ENCODE measurements at regions of chr3 and their contacts with region 1.

Region 1: DNA sequence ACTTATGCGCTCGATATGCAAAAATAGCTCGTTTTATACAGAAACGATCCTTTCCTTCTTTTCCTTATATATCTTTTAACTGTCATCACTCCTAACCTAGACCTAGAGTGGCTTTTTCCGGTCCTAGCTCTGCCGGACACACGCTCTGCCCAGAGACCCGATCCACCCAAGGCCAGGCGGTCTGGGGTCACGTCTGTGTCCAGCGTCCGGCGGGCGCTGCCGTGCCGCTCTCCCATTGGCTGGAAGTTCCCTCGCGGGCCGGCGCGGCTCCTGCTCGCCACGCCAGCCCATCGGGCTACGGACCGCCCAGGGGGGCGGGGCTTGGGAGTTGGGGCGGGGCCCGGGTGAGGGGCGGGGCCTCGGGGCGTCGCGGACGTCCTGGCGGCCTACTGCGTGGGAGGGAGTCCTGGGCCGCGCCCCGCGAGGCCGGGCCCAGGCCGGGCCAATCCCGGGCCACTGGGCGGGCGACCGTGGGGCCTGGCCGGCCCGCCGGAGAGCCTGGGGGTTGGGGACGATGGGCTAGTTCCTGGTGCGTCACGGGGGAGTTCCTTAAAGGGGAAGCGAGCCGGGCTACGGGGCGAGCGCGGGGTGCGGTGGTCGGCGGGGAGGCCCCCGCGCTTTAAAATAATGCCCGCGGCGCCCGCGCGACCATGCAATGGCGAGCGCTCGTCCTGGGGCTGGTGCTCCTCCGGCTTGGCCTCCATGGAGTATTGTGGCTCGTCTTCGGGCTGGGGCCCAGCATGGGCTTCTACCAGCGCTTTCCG is at the start of gene EDEM1:
- DNase-seq: peak; percentile 98
- H3K4me3 Mint-ChIP-seq: peak within 1 kb of the TSS; percentile 96
- H3K27ac Mint-ChIP-seq: peak within 1 kb of the TSS; percentile 98
- H3K4me1 Mint-ChIP-seq: peaks cover 27% of the 10 kb centered on the region
- H3K27me3 Mint-ChIP-seq: no peaks in the 10 kb centered on the region
- total RNA-seq, gene EDEM1: 192 to 203 TPM

Region 2: DNA sequence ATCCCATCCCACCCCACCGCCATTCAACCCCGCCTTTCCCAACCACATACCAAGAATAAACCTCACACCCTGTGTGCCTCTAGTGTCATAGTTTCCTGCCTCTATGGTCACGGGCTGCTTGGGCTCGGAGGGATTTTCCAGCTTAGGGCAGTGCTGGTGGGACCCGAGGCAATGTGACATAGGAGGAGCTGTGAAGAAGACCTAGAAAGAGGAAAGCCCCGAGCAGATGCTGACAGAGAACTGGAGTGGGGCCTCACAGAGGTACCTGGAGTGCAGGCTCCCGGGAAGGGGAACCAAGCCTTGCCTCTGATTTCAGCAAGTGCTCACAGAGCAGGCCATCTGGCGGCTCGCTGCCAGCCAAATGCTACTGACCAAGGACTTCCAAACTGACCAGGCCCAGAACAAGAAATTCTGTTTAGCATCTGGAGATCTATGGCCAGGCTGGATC is 180.6 kb before region 1 on chr3:
- CTCF ChIA-PET with region 1: no interaction called
- POLR2A ChIA-PET with region 1: no interaction called
- intact Hi-C with region 1: no loop called
- DNase-seq: peak; percentile 94
- H3K4me3 Mint-ChIP-seq: peak overlapping the region; percentile 25
- H3K27ac Mint-ChIP-seq: peak overlapping the region; percentile 81
- H3K4me1 Mint-ChIP-seq: peaks cover 52% of the 10 kb centered on the region
- H3K27me3 Mint-ChIP-seq: no peaks in the 10 kb centered on the region

Region 3: DNA sequence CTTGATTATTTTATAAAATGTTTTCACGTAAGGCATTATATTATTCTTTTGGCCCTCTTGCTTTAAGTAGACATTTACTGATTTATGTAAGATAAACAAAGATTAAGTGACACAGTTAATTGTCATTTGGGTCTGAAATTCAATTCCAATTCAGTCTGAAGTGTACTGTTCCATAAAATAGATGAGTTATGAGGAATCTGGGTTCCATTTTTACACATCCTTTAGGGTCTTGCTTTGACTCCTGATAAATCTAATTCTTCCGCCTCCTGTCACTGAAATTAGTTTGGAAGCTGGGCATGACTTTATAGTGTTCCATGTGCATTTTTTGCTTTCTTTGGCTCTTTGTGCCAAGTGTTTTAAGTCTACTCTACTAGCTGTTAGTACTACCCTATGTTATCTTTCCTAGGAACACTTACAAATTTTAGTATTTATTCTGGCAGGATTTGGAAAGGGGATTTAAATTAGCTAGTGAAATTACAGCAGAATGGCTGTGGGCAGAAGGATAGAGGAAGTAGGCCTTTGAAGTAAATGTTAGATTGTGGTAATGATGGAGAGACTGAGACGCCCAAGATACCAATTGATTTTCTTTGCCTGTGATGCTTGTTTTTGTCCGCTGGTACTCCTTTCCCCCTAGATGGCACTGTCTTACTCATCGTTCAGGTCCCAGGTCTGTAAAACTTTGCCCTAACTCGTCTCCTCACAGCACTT is 51.0 kb before region 1 on chr3:
- CTCF ChIA-PET with region 1: interaction called, 7 read pairs
- POLR2A ChIA-PET with region 1: interaction called, 4 read pairs
- intact Hi-C with region 1: loop called (anchors 1 kb)
- DNase-seq: peak; percentile 31
- H3K4me3 Mint-ChIP-seq: no peak overlapping the region
- H3K27ac Mint-ChIP-seq: peak overlapping the region; percentile 72
- H3K4me1 Mint-ChIP-seq: peaks cover 69% of the 10 kb centered on the region
- H3K27me3 Mint-ChIP-seq: no peaks in the 10 kb centered on the region

Region 4: GRCh38 chr3:5160928-5161858 is 26.1 kb before region 1 on chr3:
- CTCF ChIA-PET with region 1: interaction called, 3 read pairs
- POLR2A ChIA-PET with region 1: interaction called, 3 read pairs
- intact Hi-C with region 1: loop called (anchors 1 kb)
- DNase-seq: peak; percentile 61
- H3K4me3 Mint-ChIP-seq: no peak overlapping the region
- H3K27ac Mint-ChIP-seq: peak overlapping the region; percentile 78
- H3K4me1 Mint-ChIP-seq: peaks cover 71% of the 10 kb centered on the region
- H3K27me3 Mint-ChIP-seq: no peaks in the 10 kb centered on the region

Region 5: GRCh38 chr3:5205165-5205941 is 18.0 kb after region 1 on chr3:
- CTCF ChIA-PET with region 1: interaction called, 3 read pairs
- POLR2A ChIA-PET with region 1: interaction called, 109 read pairs
- intact Hi-C with region 1: loop called (anchors 2 kb)
- DNase-seq: peak; percentile 74
- H3K4me3 Mint-ChIP-seq: no peak overlapping the region
- H3K27ac Mint-ChIP-seq: peak overlapping the region; percentile 89
- H3K4me1 Mint-ChIP-seq: peaks cover 43% of the 10 kb centered on the region
- H3K27me3 Mint-ChIP-seq: no peaks in the 10 kb centered on the region